Endothelial cell of umbilical vein (primary cell): ENCODE measurements at regions of chrX and their contacts with region 1.

Region 1: DNA sequence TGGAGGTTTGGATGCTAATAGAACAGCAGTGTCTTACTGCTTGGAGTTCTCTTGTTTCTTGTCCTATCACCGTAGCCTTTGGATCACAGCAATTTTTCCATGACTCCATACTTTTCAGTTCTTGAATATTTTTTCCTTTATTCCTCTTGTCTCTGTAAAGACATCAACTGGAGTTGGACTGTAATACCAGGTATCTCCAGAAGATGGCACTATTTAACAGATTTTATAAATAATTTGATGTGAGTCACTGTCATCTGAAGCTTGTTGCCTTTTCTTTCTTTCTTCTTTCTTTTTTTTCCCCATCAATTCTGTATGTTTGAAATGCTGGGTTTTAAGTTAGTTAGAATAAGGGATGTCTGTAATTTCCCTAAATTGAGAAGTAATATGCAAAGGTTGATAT is 24.1 kb downstream of the HPRT1 start:
- DNase-seq: peak; percentile 78
- H3K4me3 ChIP-seq: no peak overlapping the region
- H3K27ac ChIP-seq: no peak overlapping the region
- H3K4me1 ChIP-seq: no peaks in the 10 kb centered on the region
- H3K27me3 ChIP-seq: no peaks in the 10 kb centered on the region
- CTCF ChIP-seq: peak in 1 of 2 donors; percentile 15
- POLR2A ChIP-seq: no peak

Region 2: GRCh38 chrX:134423615-134424014 is 60.4 kb before region 1 on chrX:
- CTCF ChIA-PET with region 1: no interaction called
- POLR2A ChIA-PET with region 1: no interaction called
- dilution Hi-C with region 1: no loop called
- intact Hi-C with region 1: loop called (anchors 5 kb)
- DNase-seq: peak; percentile 35
- H3K4me3 ChIP-seq: no peak overlapping the region
- H3K27ac ChIP-seq: no peak overlapping the region
- H3K4me1 ChIP-seq: no peaks in the 10 kb centered on the region
- H3K27me3 ChIP-seq: no peaks in the 10 kb centered on the region
- CTCF ChIP-seq: peak in 1 of 2 donors; percentile 19
- POLR2A ChIP-seq: no peak

Region 3: GRCh38 chrX:134753718-134754008 is 269.6 kb after region 1 on chrX:
- CTCF ChIA-PET with region 1: interaction called, 20 read pairs
- POLR2A ChIA-PET with region 1: no interaction called
- dilution Hi-C with region 1: no loop called
- intact Hi-C with region 1: loop called (anchors 1 kb)
- DNase-seq: peak; percentile 53
- H3K4me3 ChIP-seq: no peak overlapping the region
- H3K27ac ChIP-seq: no peak overlapping the region
- H3K4me1 ChIP-seq: no peaks in the 10 kb centered on the region
- H3K27me3 ChIP-seq: no peaks in the 10 kb centered on the region
- CTCF ChIP-seq: peak in 1 of 2 donors; percentile 5
- POLR2A ChIP-seq: no peak

Region 4: GRCh38 chrX:134764212-134764785 is 280.3 kb after region 1 on chrX:
- CTCF ChIA-PET with region 1: interaction called, 21 read pairs
- POLR2A ChIA-PET with region 1: no interaction called
- dilution Hi-C with region 1: no loop called
- intact Hi-C with region 1: no loop called
- DNase-seq: peak; percentile 41
- H3K4me3 ChIP-seq: no peak overlapping the region
- H3K27ac ChIP-seq: no peak overlapping the region
- H3K4me1 ChIP-seq: no peaks in the 10 kb centered on the region
- H3K27me3 ChIP-seq: no peaks in the 10 kb centered on the region
- CTCF ChIP-seq: peak in 1 of 2 donors; percentile 13
- POLR2A ChIP-seq: no peak

Region 5: GRCh38 chrX:134782796-134783195 is 298.8 kb after region 1 on chrX:
- CTCF ChIA-PET with region 1: interaction called, 84 read pairs
- POLR2A ChIA-PET with region 1: interaction called, 4 read pairs
- dilution Hi-C with region 1: no loop called
- intact Hi-C with region 1: loop called (anchors 1 kb)
- DNase-seq: peak; percentile 54
- H3K4me3 ChIP-seq: no peak overlapping the region
- H3K27ac ChIP-seq: no peak overlapping the region
- H3K4me1 ChIP-seq: no peaks in the 10 kb centered on the region
- H3K27me3 ChIP-seq: no peaks in the 10 kb centered on the region
- CTCF ChIP-seq: peak; percentile 21 to 23
- POLR2A ChIP-seq: no peak

Region 6: DNA sequence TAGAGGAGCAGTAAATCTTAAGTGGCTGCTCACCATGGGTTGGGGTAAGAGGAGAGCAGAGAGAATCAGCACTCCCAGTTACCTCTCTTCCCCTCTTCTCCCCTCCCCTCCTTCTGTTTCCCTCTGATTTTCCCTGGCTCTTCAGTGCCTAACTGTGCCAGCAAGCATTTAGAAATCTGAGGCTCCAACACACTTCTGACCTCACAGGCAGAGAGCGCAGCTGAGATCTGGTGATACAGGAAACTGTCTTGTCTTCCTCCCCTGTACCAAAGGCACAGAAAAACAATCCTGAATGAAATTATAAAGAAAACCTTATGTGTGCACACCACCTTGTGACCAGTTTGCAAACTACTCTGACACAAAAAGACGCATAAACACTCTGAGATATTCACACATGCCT is 424.3 kb after region 1 on chrX:
- CTCF ChIA-PET with region 1: interaction called, 4 read pairs
- POLR2A ChIA-PET with region 1: no interaction called
- dilution Hi-C with region 1: no loop called
- intact Hi-C with region 1: loop called (anchors 1 kb)
- DNase-seq: peak; percentile 67
- H3K4me3 ChIP-seq: no peak overlapping the region
- H3K27ac ChIP-seq: no peak overlapping the region
- H3K4me1 ChIP-seq: no peaks in the 10 kb centered on the region
- H3K27me3 ChIP-seq: no peaks in the 10 kb centered on the region
- CTCF ChIP-seq: peak in 1 of 2 donors; percentile 25
- POLR2A ChIP-seq: no peak

Region 7: DNA sequence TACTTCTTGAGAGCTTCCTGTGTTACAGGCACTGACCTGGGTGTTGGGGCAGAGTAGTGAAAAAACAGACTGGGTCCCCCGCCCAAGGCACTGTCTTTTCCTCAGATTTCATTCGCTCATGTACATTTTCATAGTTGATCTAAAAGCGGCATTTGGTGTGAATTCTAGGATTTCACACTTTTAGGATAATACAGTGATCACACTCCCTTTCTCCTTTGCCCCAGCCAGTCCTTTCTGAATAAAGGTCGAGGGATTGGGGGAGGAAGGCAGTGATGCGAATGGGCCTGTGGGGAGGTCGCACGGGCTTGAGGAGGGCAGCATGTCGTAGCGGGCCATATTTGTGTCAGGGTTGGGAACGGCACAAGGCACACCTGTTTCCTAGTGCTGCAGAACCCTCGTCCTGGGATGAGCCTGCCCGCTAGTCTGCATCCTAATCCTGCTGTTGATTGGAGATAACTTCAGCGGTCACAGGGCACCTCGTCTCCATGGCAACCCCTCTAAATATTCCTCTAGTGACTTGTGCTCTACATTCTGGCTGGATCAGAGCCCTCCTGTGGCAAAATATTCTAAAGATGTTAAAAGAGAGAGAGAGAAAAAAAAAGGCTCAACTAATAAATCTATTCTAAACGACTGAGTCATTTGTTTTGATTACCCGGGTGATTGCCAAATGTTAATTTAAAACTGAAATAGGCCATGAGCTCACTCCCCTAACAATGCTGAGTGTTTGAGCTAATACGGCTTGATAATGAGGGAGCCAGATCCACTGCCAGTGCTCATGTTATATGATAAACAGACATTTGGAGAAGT is 1685.1 kb after region 1 on chrX:
- CTCF ChIA-PET with region 1: no interaction called
- POLR2A ChIA-PET with region 1: no interaction called
- dilution Hi-C with region 1: no loop called
- intact Hi-C with region 1: no loop called
- DNase-seq: peak; percentile 92
- H3K4me3 ChIP-seq: no peak overlapping the region
- H3K27ac ChIP-seq: peak overlapping the region; percentile 64
- H3K4me1 ChIP-seq: peaks cover 19% of the 10 kb centered on the region
- H3K27me3 ChIP-seq: no peaks in the 10 kb centered on the region
- CTCF ChIP-seq: no peak
- POLR2A ChIP-seq: no peak